ENCODE measurements at regions of chr18 and their contacts with region 1.

Region 1: DNA sequence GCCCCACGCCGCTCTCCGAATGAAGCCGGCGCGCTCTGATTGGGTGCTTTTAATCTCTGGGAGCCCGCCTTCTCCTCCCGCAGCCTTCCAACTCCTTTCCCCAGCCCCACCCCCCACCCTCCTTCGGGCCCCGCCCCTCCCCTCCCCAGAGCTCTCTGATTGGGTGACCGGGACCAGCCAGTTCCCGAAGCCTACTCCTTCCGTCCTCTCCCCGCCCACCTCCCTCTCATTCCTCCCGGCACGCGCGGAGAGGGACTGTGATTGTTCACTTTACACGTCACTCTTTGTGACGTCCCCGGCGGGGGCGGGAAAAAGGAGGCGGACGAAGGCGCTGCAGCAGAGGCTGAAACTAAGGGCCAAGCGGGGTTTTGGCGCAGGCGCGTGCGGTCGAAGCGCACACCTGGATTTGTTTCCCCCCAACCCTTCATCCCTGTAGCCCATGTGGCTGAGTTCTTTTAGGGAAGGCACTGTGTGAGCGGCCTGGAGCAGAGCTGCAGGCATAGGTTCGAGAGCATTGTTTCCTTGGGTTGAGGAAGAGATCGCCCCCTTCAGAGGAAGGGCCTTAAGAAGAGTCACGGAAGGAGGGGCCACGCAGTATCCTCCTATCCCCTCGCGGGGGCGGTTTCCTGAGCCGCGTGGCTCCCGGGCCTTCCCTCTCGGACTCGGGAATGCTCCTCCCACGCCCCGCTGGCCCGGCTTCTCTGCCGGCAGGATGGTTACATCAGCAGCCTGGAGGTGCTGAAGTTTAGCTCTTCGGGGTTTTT is at the start of gene MEX3C:
- DNase-seq: peak; percentile 100
- H3K4me3 Mint-ChIP-seq: peak within 1 kb of the TSS; percentile 83
- H3K27ac Mint-ChIP-seq: peak within 1 kb of the TSS; percentile 99
- H3K4me1 Mint-ChIP-seq: peaks cover 20% of the 10 kb centered on the region
- H3K27me3 Mint-ChIP-seq: no peaks in the 10 kb centered on the region
- total RNA-seq, gene MEX3C: 56.6 to 61.5 TPM

Region 2: DNA sequence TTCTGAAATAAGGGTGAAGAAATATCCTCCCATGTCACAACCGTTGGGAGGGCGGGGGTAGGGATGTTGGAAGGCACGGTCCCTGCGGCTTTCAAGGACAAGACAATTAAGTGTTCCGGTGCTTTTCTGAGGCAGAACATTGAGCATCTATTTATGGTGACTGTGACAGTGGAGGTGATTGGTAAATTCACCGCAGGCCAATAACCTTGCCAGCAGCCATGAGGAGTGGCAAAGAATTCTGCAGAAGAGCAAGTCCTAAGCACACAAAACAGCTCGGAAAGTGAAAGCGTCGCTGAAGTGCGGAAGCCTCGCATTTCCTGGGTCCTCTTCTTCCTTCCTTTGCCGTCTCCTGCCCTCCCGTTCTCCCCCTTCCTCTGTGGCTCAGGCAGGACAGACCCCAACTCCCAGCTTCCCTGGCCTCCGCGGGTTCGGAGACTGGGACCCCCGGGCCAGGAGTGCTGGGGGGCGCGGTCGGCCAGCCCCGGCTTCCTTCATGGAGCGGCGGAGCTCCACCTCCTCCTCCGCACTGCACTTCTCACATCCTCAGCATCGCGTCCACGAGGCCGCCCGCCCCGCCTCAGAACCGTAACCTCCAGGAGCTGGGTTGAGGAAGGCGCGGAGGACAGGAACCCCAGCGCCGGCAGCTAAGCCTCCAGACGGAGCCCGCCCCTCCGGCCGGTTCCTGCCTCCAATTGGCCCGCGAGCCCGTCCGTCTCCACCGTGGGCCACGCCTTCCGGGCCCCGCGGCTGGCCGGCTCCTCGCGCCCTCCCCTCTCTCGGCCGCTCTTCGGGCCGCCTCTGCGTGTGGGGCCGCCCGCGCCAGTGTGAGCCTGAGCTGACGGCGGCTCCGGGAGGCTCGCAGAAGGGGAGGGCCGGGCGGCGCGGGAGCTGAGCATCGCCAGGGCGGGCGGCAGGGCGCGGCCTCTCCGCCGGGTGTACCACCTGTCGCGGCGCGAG is 319.2 kb before region 1 on chr18 and contains the start of gene ME2:
- CTCF ChIA-PET with region 1: no interaction called
- POLR2A ChIA-PET with region 1: interaction called, 4 read pairs
- intact Hi-C with region 1: loop called (anchors 5 kb)
- DNase-seq: peak; percentile 93
- H3K4me3 Mint-ChIP-seq: peak within 1 kb of the TSS; percentile 96
- H3K27ac Mint-ChIP-seq: peak within 1 kb of the TSS; percentile 97
- H3K4me1 Mint-ChIP-seq: peaks cover 21% of the 10 kb centered on the region
- H3K27me3 Mint-ChIP-seq: peaks cover under 1% of the 10 kb centered on the region
- total RNA-seq, gene ME2: 111 to 115 TPM

Region 3: GRCh38 chr18:51029694-51030536 is 167.9 kb before region 1 on chr18 and contains the start of gene SMAD4:
- CTCF ChIA-PET with region 1: no interaction called
- POLR2A ChIA-PET with region 1: interaction called, 5 read pairs
- intact Hi-C with region 1: loop called (anchors 1 kb)
- DNase-seq: peak; percentile 99
- H3K4me3 Mint-ChIP-seq: peak within 1 kb of the TSS; percentile 99
- H3K27ac Mint-ChIP-seq: peak within 1 kb of the TSS; percentile 91
- H3K4me1 Mint-ChIP-seq: peaks cover 58% of the 10 kb centered on the region
- H3K27me3 Mint-ChIP-seq: no peaks in the 10 kb centered on the region
- total RNA-seq, gene SMAD4: 72.5 to 72.7 TPM

Region 4: GRCh38 chr18:51153659-51154371 is 44.0 kb before region 1 on chr18:
- CTCF ChIA-PET with region 1: interaction called, 6 read pairs
- POLR2A ChIA-PET with region 1: interaction called, 35 read pairs
- intact Hi-C with region 1: loop called (anchors 1 kb)
- DNase-seq: peak; percentile 70
- H3K4me3 Mint-ChIP-seq: peak overlapping the region; percentile 70
- H3K27ac Mint-ChIP-seq: peak overlapping the region; percentile 97
- H3K4me1 Mint-ChIP-seq: peaks cover 47% of the 10 kb centered on the region
- H3K27me3 Mint-ChIP-seq: no peaks in the 10 kb centered on the region

Region 5: DNA sequence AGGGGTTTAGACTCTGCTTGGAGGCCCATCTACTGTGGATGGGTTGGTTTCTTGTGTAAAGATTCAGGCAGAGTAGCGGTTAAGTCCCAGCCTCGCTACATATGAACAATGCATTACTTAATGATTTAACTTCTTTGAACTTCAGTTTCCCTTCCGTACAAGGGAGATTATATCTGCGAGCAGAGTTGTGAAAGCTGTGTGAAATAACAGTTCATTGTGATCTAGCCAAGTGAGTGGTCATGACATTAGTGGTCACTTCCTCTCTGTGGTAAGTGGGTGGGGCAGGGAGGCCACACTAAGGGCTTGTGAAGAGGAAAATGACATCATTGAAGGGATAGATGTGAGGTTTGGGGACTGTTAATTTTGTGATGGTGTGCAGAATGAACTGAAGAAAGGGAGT is 13.7 kb after region 1 on chr18:
- CTCF ChIA-PET with region 1: no interaction called
- POLR2A ChIA-PET with region 1: interaction called, 7 read pairs
- intact Hi-C with region 1: loop called (anchors 1 kb)
- DNase-seq: peak; percentile 84
- H3K4me3 Mint-ChIP-seq: no peak overlapping the region
- H3K27ac Mint-ChIP-seq: peak overlapping the region; percentile 35
- H3K4me1 Mint-ChIP-seq: peaks cover 14% of the 10 kb centered on the region
- H3K27me3 Mint-ChIP-seq: no peaks in the 10 kb centered on the region

Measured in activated CD4-positive, alpha-beta memory T cell treated with anti-CD3 and anti-CD28 coated beads for 36 hours (primary cell).